ENCODE measurements at regions of chr3 and their contacts with region 1.

Region 1: DNA sequence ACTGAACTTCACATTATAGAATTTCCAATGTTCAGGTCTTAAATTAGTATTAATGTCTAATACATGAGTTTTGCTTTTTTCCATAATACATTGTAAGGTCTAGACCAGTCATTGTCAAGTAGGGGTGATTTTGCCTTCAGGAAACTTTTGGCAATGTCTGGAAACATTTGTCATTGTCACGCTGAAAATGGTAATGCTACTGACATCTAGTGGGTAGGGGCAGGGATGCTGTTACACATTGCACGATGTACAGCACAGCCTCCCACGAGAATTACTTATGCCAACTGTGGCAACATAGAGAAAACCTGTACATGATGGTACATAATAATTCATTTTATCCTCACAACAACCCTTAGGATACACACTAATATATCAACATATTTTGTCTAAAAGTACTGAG is 384.1 kb downstream of the CADM2 start:
- DNase-seq: no peak
- H3K4me3 ChIP-seq: no peak overlapping the region
- H3K27ac ChIP-seq: no peak overlapping the region
- H3K4me1 ChIP-seq: no peaks in the 10 kb centered on the region
- H3K27me3 ChIP-seq: no peaks in the 10 kb centered on the region
- CTCF ChIP-seq: peak; percentile 63

Region 2: GRCh38 chr3:85110393-85110792 is 232.5 kb before region 1 on chr3:
- CTCF ChIA-PET with region 1: no interaction called
- POLR2A ChIA-PET with region 1: no interaction called
- intact Hi-C with region 1: loop called (anchors 1 kb)
- DNase-seq: no peak
- H3K4me3 ChIP-seq: no peak overlapping the region
- H3K27ac ChIP-seq: no peak overlapping the region
- H3K4me1 ChIP-seq: no peaks in the 10 kb centered on the region
- H3K27me3 ChIP-seq: no peaks in the 10 kb centered on the region
- CTCF ChIP-seq: peak; percentile 26; the same call in 1 of the 2 replicates